Uterus (tissue), 4 donors: ENCODE measurements at regions of chr20 and their contacts with region 1.

Region 1: GRCh38 chr20:58980700-58981627 is at the start of gene NELFCD:
- DNase-seq: peak; percentile 83 to 92
- H3K4me3 ChIP-seq: peak within 1 kb of the TSS; percentile 68 to 79
- H3K27ac ChIP-seq: peak within 1 kb of the TSS; percentile 89 to 93
- H3K4me1 ChIP-seq: peaks cover 0 to 8% of the 10 kb centered on the region in 2 donors
- H3K27me3 ChIP-seq: no peaks in the 10 kb centered on the region
- CTCF ChIP-seq: peak in 1 of 4 experiments; percentile 19
- POLR2A ChIP-seq: peak; percentile 70 to 82
- total RNA-seq, gene NELFCD: 15.9 to 66.6 (median 41.3) TPM

Region 2: GRCh38 chr20:58778760-58779159 is 202.2 kb before region 1 on chr20:
- intact Hi-C with region 1: no loop called
- DNase-seq: no peak
- H3K4me3 ChIP-seq: no peak overlapping the region
- H3K27ac ChIP-seq: no peak overlapping the region
- H3K4me1 ChIP-seq: no peaks in the 10 kb centered on the region
- H3K27me3 ChIP-seq: no peaks in the 10 kb centered on the region
- CTCF ChIP-seq: no peak
- POLR2A ChIP-seq: no peak

Region 3: GRCh38 chr20:58890518-58891085 is 90.4 kb before region 1 on chr20:
- intact Hi-C with region 1: loop called (anchors 10 kb)
- DNase-seq: peak; percentile 83 to 86
- H3K4me3 ChIP-seq: peak overlapping the region; percentile 77 to 96
- H3K27ac ChIP-seq: peak overlapping the region; percentile 98 to 100
- H3K4me1 ChIP-seq: peaks cover 5 to 9% of the 10 kb centered on the region in 2 donors
- H3K27me3 ChIP-seq: no peaks in the 10 kb centered on the region
- CTCF ChIP-seq: no peak
- POLR2A ChIP-seq: peak; percentile 40 to 42